PC-3 (cell line): ENCODE measurements at regions of chr12 and their contacts with region 1.

Region 1: GRCh38 chr12:116955382-116956021 is 44.8 kb downstream of the FBXW8 start:
- DNase-seq: peak; percentile 86
- ATAC-seq: peak; percentile 34; the same call in 1 of the 2 replicates
- H3K4me3 ChIP-seq: no peak overlapping the region
- H3K27ac ChIP-seq: no peak overlapping the region
- H3K4me1 ChIP-seq: peaks cover 36% of the 10 kb centered on the region
- H3K27me3 ChIP-seq: no peaks in the 10 kb centered on the region
- CTCF ChIP-seq: peak; percentile 88

Region 2: DNA sequence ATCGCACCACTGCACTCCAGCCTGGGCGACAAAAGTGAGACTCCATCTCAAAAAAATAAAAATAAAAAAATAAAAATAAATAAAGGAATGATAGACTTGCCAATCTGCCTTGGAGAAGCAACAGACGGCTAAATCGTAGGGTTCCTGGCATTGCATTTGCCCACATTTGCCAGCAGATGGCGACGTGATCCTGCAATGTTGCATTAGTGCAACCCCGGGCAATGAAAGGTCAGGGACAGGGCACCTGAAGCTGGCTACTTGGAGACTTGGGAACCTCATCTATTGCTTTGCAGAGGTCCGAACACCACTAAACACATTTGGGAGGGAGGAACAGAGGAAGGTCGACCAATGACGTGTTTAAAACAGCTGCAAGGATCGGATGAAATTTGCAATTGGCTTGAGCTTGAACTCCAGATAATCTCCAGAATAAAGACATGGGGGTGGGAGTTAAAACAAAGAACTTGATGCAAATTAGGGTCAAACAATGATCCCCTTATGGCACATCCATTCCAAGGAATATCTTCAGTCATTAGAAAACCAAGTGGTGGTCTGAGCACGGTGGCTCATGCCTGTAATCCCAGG is 252.2 kb before region 1 on chr12:
- CTCF ChIA-PET with region 1: interaction called, 6 read pairs
- POLR2A ChIA-PET with region 1: no interaction called
- intact Hi-C with region 1: loop called (anchors 2 kb)
- DNase-seq: peak; percentile 88
- ATAC-seq: peak; percentile 91
- H3K4me3 ChIP-seq: no peak overlapping the region
- H3K27ac ChIP-seq: no peak overlapping the region
- H3K4me1 ChIP-seq: peaks cover 7% of the 10 kb centered on the region
- H3K27me3 ChIP-seq: no peaks in the 10 kb centered on the region
- CTCF ChIP-seq: peak; percentile 91

Region 3: GRCh38 chr12:116737774-116738700 is 217.5 kb before region 1 on chr12 and contains the starts of genes RNFT2 and SPRING1:
- CTCF ChIA-PET with region 1: no interaction called
- POLR2A ChIA-PET with region 1: no interaction called
- intact Hi-C with region 1: loop called (anchors 5 kb)
- DNase-seq: peak; percentile 99
- ATAC-seq: peak; percentile 88
- H3K4me3 ChIP-seq: peak within 1 kb of the TSS; percentile 97
- H3K27ac ChIP-seq: no peak within 1 kb of the TSS
- H3K4me1 ChIP-seq: peaks cover 35% of the 10 kb centered on the region
- H3K27me3 ChIP-seq: no peaks in the 10 kb centered on the region
- CTCF ChIP-seq: 0 out of 2 replicates have a peak, but pooled peaks have one; percentile 21
- total RNA-seq, gene RNFT2: 12.6 and 15.8 TPM in 2 replicates
- total RNA-seq, gene SPRING1: 33.4 and 45.2 TPM in 2 replicates

Region 4: GRCh38 chr12:116880817-116881324 is 74.6 kb before region 1 on chr12:
- CTCF ChIA-PET with region 1: interaction called, 8 read pairs
- POLR2A ChIA-PET with region 1: no interaction called
- intact Hi-C with region 1: loop called (anchors 1 kb)
- DNase-seq: peak; percentile 72
- ATAC-seq: peak; percentile 83
- H3K4me3 ChIP-seq: peak overlapping the region; percentile 72
- H3K27ac ChIP-seq: no peak overlapping the region
- H3K4me1 ChIP-seq: peaks cover 30% of the 10 kb centered on the region
- H3K27me3 ChIP-seq: peaks cover 27% of the 10 kb centered on the region
- CTCF ChIP-seq: no peak; the same call in 1 of the 2 replicates

Region 5: DNA sequence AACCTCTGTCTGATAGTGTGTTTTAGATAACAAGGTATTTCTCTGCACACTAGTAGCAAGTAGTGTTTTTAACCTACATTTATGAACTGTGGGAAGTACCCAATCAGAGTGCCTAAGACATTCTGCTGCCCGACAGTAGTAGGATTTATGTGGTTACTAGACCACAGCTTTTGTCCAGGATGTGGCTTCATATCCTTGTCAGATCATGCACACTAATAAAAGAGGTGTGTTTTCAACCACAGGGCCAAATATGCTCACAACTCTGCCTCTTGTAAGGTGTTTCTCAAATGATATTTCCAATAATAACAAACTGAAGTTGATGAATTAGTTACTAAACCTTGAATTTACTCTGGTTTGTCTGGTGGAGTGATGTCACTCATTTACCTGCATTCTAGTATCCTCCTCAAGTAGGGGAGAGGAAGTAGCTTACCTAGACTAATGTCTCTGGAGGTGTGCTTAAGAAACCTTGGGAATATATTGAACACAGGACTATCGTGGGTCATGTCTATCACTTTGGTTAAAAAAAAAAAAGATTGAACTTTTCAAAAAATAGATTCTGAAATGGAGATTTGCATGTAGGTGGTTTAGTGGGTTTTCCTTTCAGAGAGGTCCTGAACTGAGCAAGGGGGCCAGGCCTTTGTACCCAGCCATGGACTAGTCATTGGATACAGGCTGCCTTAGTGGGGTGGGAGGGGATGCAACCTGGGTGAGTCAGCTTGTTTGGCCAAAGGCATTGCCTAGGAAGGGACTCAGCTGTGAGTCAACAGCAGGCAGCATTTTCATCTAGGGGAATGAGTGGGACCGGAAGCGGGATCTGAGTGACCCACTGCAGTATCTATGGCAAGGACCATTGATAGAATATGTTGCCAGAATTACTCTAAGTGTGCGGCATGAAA is 30.7 kb before region 1 on chr12:
- CTCF ChIA-PET with region 1: interaction called, 4 read pairs
- POLR2A ChIA-PET with region 1: no interaction called
- intact Hi-C with region 1: loop called (anchors 1 kb)
- DNase-seq: peak; percentile 97
- ATAC-seq: peak; percentile 93
- H3K4me3 ChIP-seq: peak overlapping the region; percentile 54
- H3K27ac ChIP-seq: peak overlapping the region; percentile 94
- H3K4me1 ChIP-seq: peaks cover 27% of the 10 kb centered on the region
- H3K27me3 ChIP-seq: no peaks in the 10 kb centered on the region
- CTCF ChIP-seq: no peak

Region 6: DNA sequence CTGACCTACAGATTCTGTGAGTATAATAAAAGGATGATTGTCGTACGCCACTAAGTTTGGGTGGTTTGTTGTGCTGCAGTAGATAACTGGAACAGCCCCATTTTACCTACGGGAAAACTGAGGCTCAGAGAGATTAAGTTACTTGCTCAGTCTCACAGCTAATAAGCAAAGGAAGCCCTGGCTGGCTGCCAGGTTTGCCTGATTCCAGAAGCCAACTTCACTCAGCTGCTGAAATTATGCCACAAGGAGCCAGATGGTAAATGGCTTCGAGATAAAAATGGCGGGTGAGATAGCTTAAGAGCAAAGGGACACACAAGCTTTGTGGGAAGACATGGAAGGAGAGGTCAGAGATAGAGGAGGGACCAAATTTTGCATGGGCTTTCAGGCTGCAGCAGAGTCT is 597.5 kb after region 1 on chr12:
- CTCF ChIA-PET with region 1: no interaction called
- POLR2A ChIA-PET with region 1: no interaction called
- intact Hi-C with region 1: no loop called
- DNase-seq: peak; percentile 9
- ATAC-seq: no peak
- H3K4me3 ChIP-seq: no peak overlapping the region
- H3K27ac ChIP-seq: no peak overlapping the region
- H3K4me1 ChIP-seq: no peaks in the 10 kb centered on the region
- H3K27me3 ChIP-seq: no peaks in the 10 kb centered on the region
- CTCF ChIP-seq: no peak